ENCODE measurements at regions of chr6 and their contacts with region 1.

Region 1: DNA sequence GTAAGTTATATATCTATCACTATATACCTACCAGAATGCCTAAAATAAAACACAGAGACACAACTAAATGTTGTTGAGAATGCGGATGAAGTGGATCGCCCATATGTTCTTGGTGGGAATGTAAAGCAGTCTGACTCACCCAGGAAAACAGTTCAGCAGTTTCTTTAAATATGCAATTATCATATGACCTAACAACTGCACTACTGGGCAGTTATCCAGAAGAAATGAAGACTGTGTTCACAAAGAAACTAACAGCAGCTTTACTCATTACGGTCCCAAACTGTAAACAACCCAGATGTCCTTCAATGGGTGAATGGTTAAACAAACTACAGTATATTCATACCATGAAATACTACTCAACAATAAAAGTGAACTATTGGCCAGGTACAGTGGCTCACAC is 14.3 kb upstream of the ZC3H12D start:
- DNase-seq: no peak
- H3K4me3 Mint-ChIP-seq: no peak overlapping the region
- H3K27ac Mint-ChIP-seq: no peak overlapping the region
- H3K4me1 Mint-ChIP-seq: peaks cover 54% of the 10 kb centered on the region
- H3K27me3 Mint-ChIP-seq: no peaks in the 10 kb centered on the region

Region 2: DNA sequence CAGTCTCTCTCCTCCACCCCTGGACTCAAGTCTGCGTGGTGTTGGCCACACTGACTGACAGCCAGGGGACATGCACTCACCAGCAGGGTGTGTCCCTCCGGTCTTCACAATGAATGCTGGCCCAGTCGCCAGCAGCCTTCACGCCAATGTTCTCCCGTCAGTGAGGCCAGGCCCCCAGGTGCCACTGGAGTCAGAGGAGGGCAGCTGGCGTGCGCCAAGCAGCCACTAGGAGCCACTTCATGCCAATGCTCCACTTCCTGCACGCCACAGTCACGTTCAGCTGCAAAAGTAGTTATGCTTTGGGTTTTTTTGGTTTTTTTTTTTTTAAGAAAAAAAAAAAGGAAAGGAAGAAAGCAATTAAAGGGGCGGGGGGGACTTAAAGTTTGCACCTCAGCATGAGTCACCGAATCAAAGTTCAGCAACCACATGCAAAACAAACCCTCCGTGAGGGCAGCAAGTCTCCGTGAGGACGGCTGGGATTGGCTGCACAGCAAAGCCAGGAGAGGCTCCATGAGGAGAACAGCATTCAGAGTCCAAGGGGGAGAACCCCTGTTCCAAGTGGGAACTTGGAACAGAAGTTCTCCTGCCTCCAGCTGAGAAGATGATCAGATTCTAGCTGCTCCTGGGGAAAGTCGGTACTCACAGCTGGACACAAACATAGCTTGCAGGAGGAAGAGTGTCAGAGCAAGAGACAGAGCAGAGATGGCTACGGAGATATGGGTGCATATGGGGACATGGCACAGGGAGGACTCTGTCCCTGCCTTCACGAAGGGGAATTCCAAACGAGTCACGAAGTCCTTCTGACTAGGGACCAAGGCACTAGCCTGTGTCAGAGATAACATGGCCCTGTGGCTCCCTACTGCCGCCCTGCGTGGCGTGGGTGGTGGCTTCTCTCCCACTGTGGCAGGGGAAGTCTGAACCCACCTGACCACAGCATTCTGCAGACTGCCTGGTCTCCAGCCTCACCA is 14.0 kb before region 1 on chr6 and contains the start of gene ZC3H12D:
- CTCF ChIA-PET with region 1: interaction called, 21 read pairs
- POLR2A ChIA-PET with region 1: interaction called, 4 read pairs
- DNase-seq: peak; percentile 85
- H3K4me3 Mint-ChIP-seq: peak within 1 kb of the TSS; percentile 78
- H3K27ac Mint-ChIP-seq: peak within 1 kb of the TSS; percentile 99
- H3K4me1 Mint-ChIP-seq: peaks cover 59% of the 10 kb centered on the region
- H3K27me3 Mint-ChIP-seq: no peaks in the 10 kb centered on the region
- total RNA-seq, gene ZC3H12D: 10.7 to 16.5 TPM

Region 3: DNA sequence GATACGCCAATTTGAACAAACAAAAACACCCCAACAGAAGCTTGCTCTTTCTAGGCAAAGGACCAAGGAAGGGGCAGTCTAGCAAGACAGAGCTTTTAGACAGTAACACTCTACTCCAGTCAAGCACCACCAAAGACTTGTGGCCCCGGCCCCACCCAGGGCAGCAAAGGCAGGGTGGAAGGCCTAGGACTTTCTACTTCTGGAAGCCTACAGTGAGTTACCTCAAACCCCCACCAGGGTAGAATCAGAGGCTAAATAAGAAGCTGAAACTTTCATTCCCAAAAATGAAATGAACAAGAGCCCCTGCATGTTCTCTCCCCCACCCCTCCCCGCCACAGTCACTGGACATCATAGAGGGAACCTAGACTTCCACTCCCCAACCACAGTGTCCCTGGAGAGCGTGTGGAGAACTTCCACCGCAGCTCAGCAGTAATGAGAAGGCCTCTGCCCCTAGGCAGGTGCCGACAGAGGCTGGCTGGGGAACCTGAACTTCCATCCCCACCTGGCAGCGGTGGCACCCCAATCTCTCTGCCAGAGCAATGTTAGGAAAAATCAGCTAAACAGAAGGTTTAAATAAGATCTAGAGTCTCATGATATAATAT is 109.4 kb after region 1 on chr6:
- CTCF ChIA-PET with region 1: no interaction called
- POLR2A ChIA-PET with region 1: no interaction called
- DNase-seq: no peak
- H3K4me3 Mint-ChIP-seq: no peak overlapping the region
- H3K27ac Mint-ChIP-seq: peak overlapping the region; percentile 76
- H3K4me1 Mint-ChIP-seq: peaks cover 38% of the 10 kb centered on the region
- H3K27me3 Mint-ChIP-seq: no peaks in the 10 kb centered on the region

Measured in activated CD4-positive, alpha-beta T cell treated with anti-CD3 and anti-CD28 coated beads, Interleukin-2, amount 10 ng/mL, durations not matched to agents 7 days and 5 days (primary cell).